PC-3 (cell line): ENCODE measurements at regions of chr4 and their contacts with region 1.

Region 1: DNA sequence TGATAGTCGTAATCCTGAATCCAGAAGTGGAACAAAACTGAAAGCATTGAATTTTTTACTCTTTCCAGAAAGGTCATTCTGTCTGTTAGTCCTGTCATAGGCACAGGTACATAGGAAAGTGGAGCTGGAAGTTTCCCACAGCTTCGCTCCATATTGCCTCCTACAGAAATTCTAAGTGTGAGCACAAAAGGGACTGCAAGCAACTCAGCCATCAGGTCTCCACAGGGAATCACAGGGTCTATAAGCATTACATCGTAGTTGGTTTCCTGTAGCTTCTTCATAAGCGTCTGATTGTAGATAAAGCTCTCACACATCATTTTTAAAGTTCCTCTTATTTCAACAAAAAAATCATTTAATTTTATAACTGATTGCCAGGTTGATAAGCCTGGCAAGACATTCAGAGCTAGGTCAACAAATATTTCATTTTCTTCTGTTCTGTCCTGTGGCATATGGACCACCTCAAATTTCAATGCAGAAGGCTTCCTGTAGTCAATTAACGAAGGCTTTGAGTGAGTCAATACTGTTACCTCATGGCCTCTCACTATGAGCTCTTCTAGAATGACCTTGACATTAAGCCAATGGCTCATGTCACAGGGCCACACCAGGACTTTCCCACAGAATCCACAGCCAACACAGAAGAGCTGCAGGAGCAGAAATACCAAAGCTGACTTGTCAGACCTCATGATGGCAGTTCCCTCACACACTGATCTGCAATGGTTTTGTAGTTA is at the start of gene UGT2A3:
- DNase-seq: no peak
- ATAC-seq: no peak
- H3K4me3 ChIP-seq: no peak within 1 kb of the TSS
- H3K27ac ChIP-seq: no peak within 1 kb of the TSS
- H3K4me1 ChIP-seq: no peaks in the 10 kb centered on the region
- H3K27me3 ChIP-seq: no peaks in the 10 kb centered on the region
- CTCF ChIP-seq: no peak
- total RNA-seq, gene UGT2A3: not detected in 2 replicates

Region 2: DNA sequence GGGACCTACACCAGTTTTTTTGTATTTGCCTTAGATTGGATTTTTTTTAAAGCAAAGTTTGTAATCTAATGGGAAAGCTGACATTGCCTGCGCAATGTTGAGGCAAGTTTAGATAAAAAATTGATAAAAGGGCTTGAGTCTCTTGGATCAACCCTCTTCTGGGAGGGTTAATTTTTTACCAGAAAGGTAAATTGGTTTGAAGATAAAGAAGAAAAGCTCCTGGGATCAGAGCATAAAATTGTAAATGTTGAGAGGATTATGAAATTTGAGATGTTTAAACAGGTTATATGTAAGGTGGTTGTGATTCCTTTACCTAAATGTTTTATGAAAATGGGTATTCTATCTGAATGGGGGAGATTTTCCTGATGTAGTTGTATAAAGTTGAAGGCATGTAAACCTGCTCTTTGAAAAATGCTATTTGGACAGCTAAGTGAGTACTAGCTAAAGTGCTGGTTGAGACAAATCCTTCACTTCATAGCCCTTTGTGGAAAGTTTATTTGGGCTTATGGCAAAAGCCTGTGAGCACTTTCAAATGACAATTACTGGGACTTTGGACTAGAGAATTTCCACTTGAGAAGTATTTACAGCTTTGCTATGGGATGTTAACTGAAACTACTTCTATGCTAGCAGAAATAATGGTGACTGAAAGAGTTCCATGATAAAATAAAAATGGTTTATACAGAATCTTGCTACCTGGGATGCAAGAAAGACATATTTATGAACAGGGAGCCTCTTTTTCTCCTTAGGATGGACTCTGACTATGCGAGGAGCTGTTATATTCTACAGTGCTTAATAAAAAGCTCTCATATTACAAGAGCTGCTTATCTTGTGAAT is 79.2 kb before region 1 on chr4:
- CTCF ChIA-PET with region 1: no interaction called
- POLR2A ChIA-PET with region 1: no interaction called
- intact Hi-C with region 1: loop called (anchors 2 kb)
- DNase-seq: peak; percentile 31
- ATAC-seq: peak; percentile 56; the same call in 1 of the 2 replicates
- H3K4me3 ChIP-seq: no peak overlapping the region
- H3K27ac ChIP-seq: no peak overlapping the region
- H3K4me1 ChIP-seq: peaks cover 25% of the 10 kb centered on the region
- H3K27me3 ChIP-seq: no peaks in the 10 kb centered on the region
- CTCF ChIP-seq: no peak

Region 3: GRCh38 chr4:68912774-68913173 is 38.5 kb before region 1 on chr4:
- CTCF ChIA-PET with region 1: no interaction called
- POLR2A ChIA-PET with region 1: no interaction called
- intact Hi-C with region 1: loop called (anchors 5 kb)
- DNase-seq: peak; percentile 74
- ATAC-seq: peak; percentile 92
- H3K4me3 ChIP-seq: no peak overlapping the region
- H3K27ac ChIP-seq: peak overlapping the region; percentile 26
- H3K4me1 ChIP-seq: peaks cover 14% of the 10 kb centered on the region
- H3K27me3 ChIP-seq: no peaks in the 10 kb centered on the region
- CTCF ChIP-seq: no peak